Activated B cell treated with CpG ODN at 0.5 μM for 24 hours (primary cell): ENCODE measurements at regions of chr17 and their contacts with region 1.

Region 1: DNA sequence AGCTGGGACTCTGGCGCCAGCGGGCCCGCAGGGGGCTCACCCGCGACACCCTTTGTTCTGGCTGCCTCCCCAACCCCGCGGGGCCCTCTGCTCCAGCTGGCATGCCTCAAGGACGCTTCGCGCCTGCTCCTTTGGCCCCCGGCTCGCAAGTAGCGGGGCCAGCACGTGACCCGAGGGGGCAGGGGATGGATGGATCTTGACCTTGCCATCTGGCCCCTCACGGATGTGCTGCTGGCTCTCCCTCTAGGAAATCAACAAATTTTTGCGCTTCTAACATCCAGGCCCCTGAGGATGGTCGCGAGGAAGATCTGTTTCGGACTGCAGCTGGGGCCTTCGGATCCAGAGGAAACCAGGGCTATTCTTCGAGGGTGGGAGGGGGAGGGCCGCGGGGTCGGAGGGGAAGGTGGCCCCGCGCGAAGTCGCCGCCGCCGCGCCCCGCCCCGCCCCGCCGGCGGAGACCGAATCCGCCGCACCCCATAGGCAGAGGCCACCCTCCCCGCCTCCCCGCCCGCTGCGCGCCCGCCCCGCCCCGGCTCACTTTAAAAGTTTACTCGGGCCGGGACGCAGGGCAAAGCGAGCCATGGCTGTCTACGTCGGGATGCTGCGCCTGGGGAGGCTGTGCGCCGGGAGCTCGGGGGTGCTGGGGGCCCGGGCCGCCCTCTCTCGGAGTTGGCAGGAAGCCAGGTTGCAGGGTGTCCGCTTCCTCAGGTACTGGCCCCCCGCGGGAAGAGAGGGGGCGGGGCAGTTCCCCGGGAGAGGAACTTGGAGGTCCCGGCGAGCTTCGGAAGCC is at the start of gene ACSF2:
- DNase-seq: peak; percentile 65
- ATAC-seq: peak; percentile 82
- H3K4me3 Mint-ChIP-seq: peak within 1 kb of the TSS; percentile 88
- H3K27ac Mint-ChIP-seq: peak within 1 kb of the TSS; percentile 83
- H3K4me1 Mint-ChIP-seq: peaks cover 44% of the 10 kb centered on the region
- H3K27me3 Mint-ChIP-seq: no peaks in the 10 kb centered on the region
- CTCF ChIP-seq: no peak
- total RNA-seq, gene ACSF2: 16.4 and 17.9 TPM in 2 replicates

Region 2: DNA sequence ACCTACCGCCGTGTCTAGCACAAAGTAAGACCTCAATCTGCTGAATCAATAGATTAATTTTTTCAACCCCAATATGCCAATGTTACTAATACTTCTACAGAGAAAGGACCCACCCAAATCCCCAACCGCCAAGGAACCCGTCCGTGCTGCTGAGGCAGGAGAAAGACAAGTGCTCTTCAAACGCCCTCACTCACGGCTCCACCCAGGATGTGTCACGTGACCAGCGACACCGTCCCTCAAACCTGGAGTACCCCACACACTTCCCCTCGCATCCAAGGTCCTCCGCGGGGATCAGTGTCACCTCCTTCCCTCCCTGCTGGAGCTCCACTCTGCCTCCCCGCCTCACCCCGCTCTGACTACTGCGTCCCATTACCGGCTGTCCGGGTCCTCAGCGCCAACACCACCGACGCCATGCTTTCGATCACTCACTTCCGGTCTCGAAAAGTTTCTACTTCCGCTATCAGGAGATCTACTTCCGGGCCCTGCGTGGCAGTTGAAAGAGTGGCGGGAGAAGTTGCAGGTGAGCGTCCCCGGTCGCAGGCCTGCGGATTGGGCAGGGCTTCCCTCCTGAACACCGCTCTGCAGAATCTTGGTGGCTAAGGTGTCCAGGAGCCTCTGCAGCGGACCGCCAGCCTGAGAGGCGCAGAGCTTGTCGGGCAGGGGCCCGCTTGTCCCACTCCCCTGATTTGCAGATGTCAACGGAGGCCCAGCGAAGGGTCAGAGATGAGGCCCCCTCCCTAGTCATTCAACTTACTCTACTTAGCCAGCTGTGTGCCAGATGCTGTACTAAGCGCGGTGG is 52.9 kb before region 1 on chr17 and contains the starts of genes EME1 and MRPL27:
- CTCF ChIA-PET with region 1: no interaction called
- POLR2A ChIA-PET with region 1: no interaction called
- intact Hi-C with region 1: loop called (anchors 2 kb)
- DNase-seq: peak; percentile 85
- ATAC-seq: peak; percentile 93
- H3K4me3 Mint-ChIP-seq: peak within 1 kb of the TSS; percentile 99
- H3K27ac Mint-ChIP-seq: peak within 1 kb of the TSS; percentile 100
- H3K4me1 Mint-ChIP-seq: peaks cover 20% of the 10 kb centered on the region
- H3K27me3 Mint-ChIP-seq: no peaks in the 10 kb centered on the region
- CTCF ChIP-seq: no peak
- total RNA-seq, gene EME1: 3.1 and 3.6 TPM in 2 replicates
- total RNA-seq, gene MRPL27: 45.0 and 49.2 TPM in 2 replicates

Region 3: GRCh38 chr17:50452610-50453300 is 26.9 kb after region 1 on chr17:
- CTCF ChIA-PET with region 1: no interaction called
- POLR2A ChIA-PET with region 1: no interaction called
- intact Hi-C with region 1: loop called (anchors 2 kb)
- DNase-seq: no peak
- ATAC-seq: peak; percentile 89
- H3K4me3 Mint-ChIP-seq: peak overlapping the region; percentile 68
- H3K27ac Mint-ChIP-seq: peak overlapping the region; percentile 88
- H3K4me1 Mint-ChIP-seq: peaks cover 33% of the 10 kb centered on the region
- H3K27me3 Mint-ChIP-seq: no peaks in the 10 kb centered on the region
- CTCF ChIP-seq: no peak